ENCODE measurements at regions of chr16 and their contacts with region 1.

Region 1: GRCh38 chr16:86768999-86769398 is 190.7 kb downstream of the FOXL1 start:
- DNase-seq: peak; percentile 84
- H3K4me3 Mint-ChIP-seq: peak overlapping the region; percentile 8
- H3K27ac Mint-ChIP-seq: peak overlapping the region; percentile 43
- H3K4me1 Mint-ChIP-seq: peaks cover 25% of the 10 kb centered on the region
- H3K27me3 Mint-ChIP-seq: peaks cover 11% of the 10 kb centered on the region
- CTCF ChIP-seq: no peak

Region 2: DNA sequence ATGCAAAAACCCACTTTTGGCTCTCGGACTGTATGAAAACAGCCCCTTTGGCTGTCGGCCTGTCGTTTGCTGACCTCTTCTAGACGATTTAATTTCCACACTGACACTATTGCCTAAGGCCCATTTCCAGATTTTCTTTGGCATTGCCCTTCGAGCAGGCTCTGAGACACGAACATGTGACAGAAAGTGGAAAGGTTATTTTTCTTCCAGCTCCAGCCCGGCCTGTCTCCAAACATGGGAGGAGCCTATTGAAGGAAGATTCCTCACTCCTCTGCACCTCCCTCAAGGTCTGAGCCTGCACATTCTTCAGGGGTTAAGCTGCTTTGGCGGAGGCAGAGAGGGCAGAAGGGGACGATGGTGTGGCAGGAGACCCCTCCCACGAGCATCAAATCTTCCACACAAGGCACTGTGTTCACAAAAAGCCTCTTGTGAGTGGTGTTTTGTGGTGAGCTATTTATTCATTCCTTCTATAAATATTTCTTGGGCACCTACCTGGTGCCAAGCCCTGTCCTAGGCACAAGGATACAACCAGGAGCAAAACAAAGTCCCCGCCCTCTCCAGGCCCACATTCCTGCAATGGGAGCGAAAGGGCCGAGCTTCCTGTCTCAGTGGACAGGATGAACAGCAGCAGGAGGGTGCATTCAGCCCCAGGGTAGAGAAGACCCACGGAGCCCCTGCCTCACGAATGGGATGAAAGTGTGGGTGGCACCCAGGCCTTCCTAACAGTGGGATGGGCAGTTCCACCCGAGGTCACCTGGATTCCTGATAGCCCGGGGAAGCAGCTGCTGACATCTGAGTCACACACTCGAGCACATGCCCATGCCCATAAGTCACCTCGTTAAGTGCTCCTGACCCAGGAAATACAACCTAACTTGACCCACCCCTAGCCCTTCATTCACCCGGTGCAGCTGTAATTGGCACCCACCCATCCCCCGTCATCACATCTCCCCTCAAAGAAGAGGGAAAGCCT is 344.3 kb before region 1 on chr16:
- CTCF ChIA-PET with region 1: no interaction called
- intact Hi-C with region 1: no loop called
- DNase-seq: no peak
- H3K4me3 Mint-ChIP-seq: no peak overlapping the region
- H3K27ac Mint-ChIP-seq: no peak overlapping the region
- H3K4me1 Mint-ChIP-seq: no peaks in the 10 kb centered on the region
- H3K27me3 Mint-ChIP-seq: peaks cover 77% of the 10 kb centered on the region
- CTCF ChIP-seq: no peak

Region 3: GRCh38 chr16:86834451-86835035 is 65.5 kb after region 1 on chr16:
- CTCF ChIA-PET with region 1: no interaction called
- intact Hi-C with region 1: loop called (anchors 5 kb)
- DNase-seq: peak; percentile 70
- H3K4me3 Mint-ChIP-seq: no peak overlapping the region
- H3K27ac Mint-ChIP-seq: no peak overlapping the region
- H3K4me1 Mint-ChIP-seq: peaks cover 11% of the 10 kb centered on the region
- H3K27me3 Mint-ChIP-seq: peaks cover 17% of the 10 kb centered on the region
- CTCF ChIP-seq: peak; percentile 64